ENCODE measurements at regions of chr17 and their contacts with region 1.

Region 1: DNA sequence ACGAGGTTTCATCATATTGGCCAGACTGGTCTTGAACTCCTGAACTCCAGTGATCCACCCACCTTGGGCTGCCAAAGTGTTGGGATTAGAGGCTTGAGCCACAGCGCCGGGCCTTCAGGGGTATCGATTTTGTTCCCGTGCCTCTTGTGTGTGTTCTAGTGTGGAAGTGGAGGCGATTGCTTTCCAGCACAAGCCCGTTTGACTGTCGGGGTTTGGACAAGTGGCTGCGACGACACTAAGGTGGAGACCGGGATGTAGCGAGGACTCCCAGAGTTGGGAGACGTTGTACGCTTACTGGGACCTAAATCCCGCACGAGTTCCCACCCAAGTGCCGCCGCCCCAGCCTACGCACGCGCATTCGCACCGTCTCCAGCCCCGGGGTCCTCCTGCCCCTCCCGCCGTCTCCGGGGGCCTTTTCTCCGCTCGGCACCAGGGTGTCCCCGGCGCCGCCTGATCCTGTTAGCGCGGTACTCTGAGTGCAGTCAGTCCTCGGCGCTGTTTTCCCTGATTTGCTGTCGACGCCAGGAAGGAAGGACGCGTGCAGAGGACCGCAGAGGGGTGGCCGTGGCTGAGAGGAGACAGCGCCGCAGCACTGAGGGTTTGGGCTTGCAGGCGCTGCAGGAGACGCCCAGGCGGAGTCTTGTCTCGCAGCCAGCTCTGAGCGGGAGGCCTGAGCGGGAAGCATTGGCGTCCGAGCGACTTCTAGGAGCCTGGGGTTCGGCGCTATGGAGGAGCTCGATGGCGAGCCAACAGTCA is at the start of gene NUP85:
- DNase-seq: peak; percentile 97
- ATAC-seq: peak; percentile 90
- H3K4me3 ChIP-seq: peak within 1 kb of the TSS; percentile 67 to 98 (median 92)
- H3K4me3 Mint-ChIP-seq: peak within 1 kb of the TSS; percentile 99
- H3K27ac ChIP-seq: peak within 1 kb of the TSS; percentile 83 to 85
- H3K27ac Mint-ChIP-seq: peak within 1 kb of the TSS; percentile 100
- H3K4me1 ChIP-seq: peaks cover 9 to 21% of the 10 kb centered on the region in 2 donors
- H3K4me1 Mint-ChIP-seq: peaks cover 26% of the 10 kb centered on the region
- H3K27me3 ChIP-seq: no peaks in the 10 kb centered on the region
- H3K27me3 Mint-ChIP-seq: no peaks in the 10 kb centered on the region
- CTCF ChIP-seq: no peak
- total RNA-seq, gene NUP85: 128 and 142 TPM in 2 replicates

Region 2: DNA sequence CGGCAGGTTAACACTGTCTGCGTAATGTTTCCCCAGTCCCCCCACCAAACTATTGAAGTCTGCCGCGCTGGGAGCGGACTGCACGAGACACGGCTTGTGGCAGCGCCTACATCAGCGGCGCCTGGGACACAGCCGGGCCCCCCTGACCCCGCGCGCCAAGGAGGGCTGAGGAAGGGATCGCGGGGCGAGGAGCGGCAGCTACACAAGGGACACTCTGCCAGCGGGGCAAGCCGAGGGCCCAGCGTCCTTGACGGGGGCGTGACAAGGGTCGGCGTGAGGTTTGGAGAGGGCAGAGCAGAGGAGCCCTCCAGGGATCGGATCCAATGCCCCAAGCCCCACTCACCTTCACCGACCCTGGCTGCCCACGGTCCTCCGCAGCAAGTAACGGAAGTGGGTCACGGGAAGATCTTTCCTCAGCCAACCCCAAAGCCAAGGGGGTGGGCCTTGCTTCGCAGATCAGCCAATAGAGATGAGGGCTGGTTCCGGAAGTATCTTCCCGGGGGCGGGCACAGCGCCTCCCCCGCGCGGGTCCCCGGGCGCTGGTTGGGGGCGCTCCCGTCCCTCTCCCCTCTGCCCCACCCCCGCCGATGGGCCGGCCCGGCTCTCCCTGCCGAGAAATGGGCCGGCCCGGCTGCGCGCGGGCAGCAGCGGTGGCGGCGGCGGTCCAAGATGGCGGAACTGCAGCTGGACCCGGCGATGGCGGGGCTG is 158.5 kb before region 1 on chr17 and contains the starts of genes ATP5PD and KCTD2:
- CTCF ChIA-PET with region 1: no interaction called
- POLR2A ChIA-PET with region 1: interaction called, 3 read pairs
- intact Hi-C with region 1: loop called (anchors 10 kb)
- DNase-seq: peak; percentile 96
- ATAC-seq: peak; percentile 97
- H3K4me3 ChIP-seq: peak within 1 kb of the TSS; percentile 77 to 97 (median 89)
- H3K4me3 Mint-ChIP-seq: peak within 1 kb of the TSS; percentile 96
- H3K27ac ChIP-seq: peak within 1 kb of the TSS; percentile 46 to 89
- H3K27ac Mint-ChIP-seq: peak within 1 kb of the TSS; percentile 94
- H3K4me1 ChIP-seq: peaks cover 13 to 16% of the 10 kb centered on the region in 2 donors
- H3K4me1 Mint-ChIP-seq: peaks cover 27% of the 10 kb centered on the region
- H3K27me3 ChIP-seq: no peaks in the 10 kb centered on the region
- H3K27me3 Mint-ChIP-seq: no peaks in the 10 kb centered on the region
- CTCF ChIP-seq: no peak
- total RNA-seq, gene ATP5PD: 98.8 and 101 TPM in 2 replicates
- total RNA-seq, gene KCTD2: 23.2 and 24.6 TPM in 2 replicates

Region 3: GRCh38 chr17:75069783-75070182 is 135.4 kb before region 1 on chr17:
- CTCF ChIA-PET with region 1: interaction called, 24 read pairs
- POLR2A ChIA-PET with region 1: no interaction called
- intact Hi-C with region 1: no loop called
- DNase-seq: no peak
- ATAC-seq: no peak
- H3K4me3 ChIP-seq: no peak overlapping the region
- H3K4me3 Mint-ChIP-seq: no peak overlapping the region
- H3K27ac ChIP-seq: no peak overlapping the region
- H3K27ac Mint-ChIP-seq: no peak overlapping the region
- H3K4me1 ChIP-seq: no peaks in the 10 kb centered on the region
- H3K4me1 Mint-ChIP-seq: no peaks in the 10 kb centered on the region
- H3K27me3 ChIP-seq: no peaks in the 10 kb centered on the region
- H3K27me3 Mint-ChIP-seq: no peaks in the 10 kb centered on the region
- CTCF ChIP-seq: no peak

Region 4: DNA sequence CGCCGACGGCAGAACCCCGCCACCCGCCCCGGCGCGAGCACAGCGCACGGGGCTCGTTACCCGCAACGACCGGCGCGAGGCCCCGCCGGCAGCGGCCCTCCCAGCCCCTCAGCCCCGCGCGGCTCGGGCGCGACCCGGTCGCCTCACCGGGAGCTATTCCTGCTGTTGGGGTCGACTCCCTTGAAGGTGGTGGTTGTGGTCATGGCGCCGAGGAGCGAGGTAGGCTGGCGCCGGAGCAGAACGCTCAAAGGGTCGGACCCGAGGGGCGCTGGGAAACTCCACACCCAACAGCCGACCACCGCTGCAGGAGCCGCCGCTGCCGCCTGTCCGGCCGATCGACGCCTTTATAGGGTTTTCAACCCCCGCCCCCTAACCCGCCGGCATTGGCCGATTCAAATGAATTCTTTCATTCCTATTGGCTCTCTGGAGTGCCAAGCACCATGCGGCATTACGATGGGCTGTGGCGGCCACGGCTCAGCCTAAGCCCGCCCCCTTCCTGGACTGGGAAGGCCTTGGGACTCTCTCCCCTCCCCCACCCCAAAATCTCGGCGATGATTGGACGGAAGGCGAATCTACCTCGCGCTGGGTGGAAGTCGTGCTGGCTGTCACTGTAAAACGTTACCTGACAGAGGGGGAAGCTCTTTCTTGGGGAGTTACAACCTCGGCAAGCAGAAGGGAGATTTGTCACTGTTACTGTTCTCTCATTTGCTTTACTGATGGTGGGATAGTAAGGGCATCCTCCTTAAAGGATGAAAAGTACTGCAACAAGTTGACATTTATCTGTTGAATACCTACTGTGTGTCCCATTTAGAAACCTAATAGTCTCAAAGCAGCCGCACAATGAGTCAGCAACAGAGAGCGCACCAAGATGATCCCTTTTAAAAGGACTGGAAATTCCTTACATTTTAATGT is 50.8 kb before region 1 on chr17 and contains the start of gene JPT1:
- CTCF ChIA-PET with region 1: interaction called, 4 read pairs
- POLR2A ChIA-PET with region 1: no interaction called
- intact Hi-C with region 1: loop called (anchors 1 kb)
- DNase-seq: peak; percentile 98
- ATAC-seq: peak; percentile 97
- H3K4me3 ChIP-seq: peak within 1 kb of the TSS; percentile 69 to 83 (median 74)
- H3K4me3 Mint-ChIP-seq: peak within 1 kb of the TSS; percentile 95
- H3K27ac ChIP-seq: peak within 1 kb of the TSS; percentile 2 to 65
- H3K27ac Mint-ChIP-seq: peak within 1 kb of the TSS; percentile 89
- H3K4me1 ChIP-seq: peaks cover 15 to 27% of the 10 kb centered on the region in 2 donors
- H3K4me1 Mint-ChIP-seq: peaks cover 30% of the 10 kb centered on the region
- H3K27me3 ChIP-seq: no peaks in the 10 kb centered on the region
- H3K27me3 Mint-ChIP-seq: no peaks in the 10 kb centered on the region
- CTCF ChIP-seq: no peak
- total RNA-seq, gene JPT1: 37.6 and 37.8 TPM in 2 replicates

Region 5: GRCh38 chr17:75182569-75183450 is 22.4 kb before region 1 on chr17 and contains the start of gene SUMO2:
- CTCF ChIA-PET with region 1: interaction called, 19 read pairs
- POLR2A ChIA-PET with region 1: interaction called, 4 read pairs
- intact Hi-C with region 1: loop called (anchors 1 kb)
- DNase-seq: peak; percentile 99
- ATAC-seq: peak; percentile 82
- H3K4me3 ChIP-seq: peak within 1 kb of the TSS; percentile 80 to 93 (median 87)
- H3K4me3 Mint-ChIP-seq: peak within 1 kb of the TSS; percentile 90
- H3K27ac ChIP-seq: peak within 1 kb of the TSS; percentile 94 to 96
- H3K27ac Mint-ChIP-seq: peak within 1 kb of the TSS; percentile 99
- H3K4me1 ChIP-seq: peaks cover 15 to 21% of the 10 kb centered on the region in 2 donors
- H3K4me1 Mint-ChIP-seq: peaks cover 26% of the 10 kb centered on the region
- H3K27me3 ChIP-seq: no peaks in the 10 kb centered on the region
- H3K27me3 Mint-ChIP-seq: no peaks in the 10 kb centered on the region
- CTCF ChIP-seq: no peak
- total RNA-seq, gene SUMO2: 229 and 234 TPM in 2 replicates

Region 6: DNA sequence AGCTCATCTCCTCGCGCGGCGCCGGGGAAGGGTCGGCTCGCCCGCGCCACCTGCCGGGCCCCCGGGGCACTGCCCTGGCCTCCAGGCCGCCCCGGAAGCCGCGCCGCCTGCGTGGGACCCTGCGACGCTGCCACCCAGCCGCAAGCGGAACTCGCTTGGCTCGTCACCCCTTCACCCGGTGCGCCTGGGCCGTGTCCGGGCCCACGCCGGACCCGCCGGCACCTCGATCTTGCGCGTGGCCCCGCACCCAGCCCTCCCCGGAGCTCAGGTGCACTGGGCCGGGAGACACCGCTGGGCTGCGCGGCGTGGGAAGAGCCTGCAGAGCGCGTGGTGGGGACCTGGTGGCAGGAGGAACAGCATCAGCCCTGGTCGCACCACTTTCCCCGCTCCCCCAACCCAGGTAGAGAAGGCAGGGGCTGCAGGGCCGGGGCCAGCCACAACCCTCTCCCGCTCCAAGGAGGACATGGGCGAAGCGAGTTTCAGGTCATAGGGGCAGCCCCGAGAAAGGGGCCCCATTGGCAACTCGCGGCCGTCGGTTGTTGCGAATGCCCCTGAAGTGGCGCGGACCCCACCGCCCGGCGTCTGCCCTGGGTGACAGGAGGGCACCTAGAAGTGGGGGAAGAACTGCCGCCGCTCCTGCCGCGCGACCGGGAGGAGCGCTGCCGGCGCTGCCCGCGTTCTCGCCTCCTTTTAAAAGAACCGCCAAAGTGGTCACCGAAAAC is 66.2 kb after region 1 on chr17:
- CTCF ChIA-PET with region 1: interaction called, 4 read pairs
- POLR2A ChIA-PET with region 1: interaction called, 4 read pairs
- intact Hi-C with region 1: loop called (anchors 1 kb)
- DNase-seq: peak; percentile 94
- ATAC-seq: peak; percentile 90
- H3K4me3 ChIP-seq: peak overlapping the region; percentile 26 to 93 (median 74)
- H3K4me3 Mint-ChIP-seq: peak overlapping the region; percentile 88
- H3K27ac ChIP-seq: peak overlapping the region; percentile 78 to 83
- H3K27ac Mint-ChIP-seq: peak overlapping the region; percentile 82
- H3K4me1 ChIP-seq: peaks cover 17 to 28% of the 10 kb centered on the region in 2 donors
- H3K4me1 Mint-ChIP-seq: peaks cover 23% of the 10 kb centered on the region
- H3K27me3 ChIP-seq: no peaks in the 10 kb centered on the region
- H3K27me3 Mint-ChIP-seq: no peaks in the 10 kb centered on the region
- CTCF ChIP-seq: peak; percentile 73

Region 7: DNA sequence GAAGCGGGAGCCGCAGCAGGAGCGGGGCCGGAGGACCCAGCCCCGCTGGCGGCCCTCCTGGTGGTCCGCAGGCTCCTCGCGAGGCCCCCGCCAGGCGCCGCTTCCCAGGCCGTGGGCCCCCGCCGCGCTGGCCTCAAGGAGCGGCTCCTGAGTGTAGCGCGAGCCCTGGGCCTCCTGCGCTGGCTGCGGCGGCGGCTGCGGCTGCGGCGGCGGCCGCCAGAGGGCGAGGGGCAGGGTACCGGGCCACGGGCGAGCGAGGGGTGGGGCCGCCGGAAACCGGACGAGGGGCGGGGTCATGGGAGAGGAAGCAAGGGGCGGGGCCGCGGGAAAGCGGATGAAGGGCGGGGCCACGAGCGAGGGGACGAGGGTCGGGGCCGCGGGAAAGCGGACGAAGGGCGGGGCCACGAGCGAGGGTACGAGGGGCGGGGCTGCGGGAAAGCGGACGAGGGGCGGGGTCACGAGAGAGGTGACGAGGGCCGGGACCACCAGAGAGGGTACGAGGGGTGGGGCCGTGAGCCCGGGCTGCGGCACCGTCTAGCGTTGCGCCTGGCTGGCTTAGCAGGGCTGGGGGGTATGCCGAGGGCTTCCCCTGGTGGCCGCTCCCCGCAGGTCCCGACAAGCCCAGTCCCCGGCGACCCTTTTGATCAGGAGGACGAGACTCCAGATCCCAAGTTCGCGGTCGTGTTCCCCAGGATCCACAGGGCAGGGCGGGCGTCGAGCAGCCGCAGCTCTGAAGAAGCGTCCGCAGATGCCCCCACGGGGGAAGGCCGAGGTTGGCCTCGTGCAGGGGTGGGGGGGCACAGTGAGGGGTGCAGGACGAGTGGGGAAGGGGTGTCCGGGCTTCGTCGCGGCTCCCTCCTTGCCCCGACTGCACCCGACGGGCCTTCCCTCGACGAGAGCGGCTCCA is 384.1 kb after region 1 on chr17:
- CTCF ChIA-PET with region 1: no interaction called
- POLR2A ChIA-PET with region 1: no interaction called
- intact Hi-C with region 1: no loop called
- DNase-seq: peak; percentile 95
- ATAC-seq: peak; percentile 84
- H3K4me3 ChIP-seq: peak overlapping the region in 4 of 5 experiments; percentile 80 to 95 (median 84)
- H3K4me3 Mint-ChIP-seq: peak overlapping the region; percentile 86
- H3K27ac ChIP-seq: peak overlapping the region; percentile 80 to 89
- H3K27ac Mint-ChIP-seq: peak overlapping the region; percentile 81
- H3K4me1 ChIP-seq: peaks cover 4 to 20% of the 10 kb centered on the region in 2 donors
- H3K4me1 Mint-ChIP-seq: peaks cover 19% of the 10 kb centered on the region
- H3K27me3 ChIP-seq: no peaks in the 10 kb centered on the region
- H3K27me3 Mint-ChIP-seq: no peaks in the 10 kb centered on the region
- CTCF ChIP-seq: peak; percentile 59

Region 8: DNA sequence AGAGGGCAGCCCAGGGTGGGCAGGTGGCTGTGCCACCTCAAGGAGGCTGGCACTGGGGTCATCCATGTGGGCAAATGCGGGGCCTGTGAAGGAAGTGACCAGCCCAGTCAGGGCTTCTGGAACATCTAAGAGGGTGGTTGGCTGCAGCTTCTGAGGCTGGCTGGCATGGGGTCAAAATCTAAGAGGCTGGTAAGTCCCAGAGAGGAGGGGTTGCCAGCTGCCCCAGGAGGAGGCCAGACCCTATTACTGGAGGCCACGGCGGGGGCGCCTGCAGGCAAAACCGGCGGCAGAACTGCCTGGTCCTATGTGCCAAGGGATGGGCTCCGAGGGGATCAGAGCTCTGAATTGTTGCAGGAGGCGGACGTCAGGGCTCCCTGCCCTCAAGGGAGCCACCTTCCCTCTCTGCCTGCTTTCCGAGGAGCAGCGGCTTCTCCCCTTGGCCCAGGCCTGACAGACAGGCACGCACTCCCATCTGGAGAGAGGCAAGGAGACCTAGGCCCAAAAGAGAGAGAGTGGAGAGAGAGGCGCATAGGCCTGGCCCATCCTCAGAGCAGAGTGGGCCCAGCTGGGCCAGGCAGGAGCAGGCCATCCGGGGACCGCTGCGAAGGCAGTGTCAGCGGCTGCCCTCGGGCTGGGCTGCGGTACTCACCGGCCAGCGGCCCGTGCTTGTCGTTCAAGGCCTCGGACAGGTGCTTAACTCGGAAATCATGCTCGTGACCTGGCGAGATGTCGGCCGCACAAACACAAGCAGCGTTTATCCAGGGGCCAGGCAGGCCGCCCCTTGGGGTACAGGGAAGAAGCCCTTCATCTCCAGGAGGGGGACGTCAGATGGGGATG is 884.7 kb after region 1 on chr17:
- CTCF ChIA-PET with region 1: no interaction called
- POLR2A ChIA-PET with region 1: interaction called, 10 read pairs
- intact Hi-C with region 1: no loop called
- DNase-seq: no peak
- ATAC-seq: no peak
- H3K4me3 ChIP-seq: no peak overlapping the region
- H3K4me3 Mint-ChIP-seq: no peak overlapping the region
- H3K27ac ChIP-seq: no peak overlapping the region
- H3K27ac Mint-ChIP-seq: no peak overlapping the region
- H3K4me1 ChIP-seq: no peaks in the 10 kb centered on the region
- H3K4me1 Mint-ChIP-seq: no peaks in the 10 kb centered on the region
- H3K27me3 ChIP-seq: no peaks in the 10 kb centered on the region
- H3K27me3 Mint-ChIP-seq: no peaks in the 10 kb centered on the region
- CTCF ChIP-seq: no peak

Measured in B cell (primary cell).